ENCODE measurements at regions of chr9 and their contacts with region 1.

Region 1: DNA sequence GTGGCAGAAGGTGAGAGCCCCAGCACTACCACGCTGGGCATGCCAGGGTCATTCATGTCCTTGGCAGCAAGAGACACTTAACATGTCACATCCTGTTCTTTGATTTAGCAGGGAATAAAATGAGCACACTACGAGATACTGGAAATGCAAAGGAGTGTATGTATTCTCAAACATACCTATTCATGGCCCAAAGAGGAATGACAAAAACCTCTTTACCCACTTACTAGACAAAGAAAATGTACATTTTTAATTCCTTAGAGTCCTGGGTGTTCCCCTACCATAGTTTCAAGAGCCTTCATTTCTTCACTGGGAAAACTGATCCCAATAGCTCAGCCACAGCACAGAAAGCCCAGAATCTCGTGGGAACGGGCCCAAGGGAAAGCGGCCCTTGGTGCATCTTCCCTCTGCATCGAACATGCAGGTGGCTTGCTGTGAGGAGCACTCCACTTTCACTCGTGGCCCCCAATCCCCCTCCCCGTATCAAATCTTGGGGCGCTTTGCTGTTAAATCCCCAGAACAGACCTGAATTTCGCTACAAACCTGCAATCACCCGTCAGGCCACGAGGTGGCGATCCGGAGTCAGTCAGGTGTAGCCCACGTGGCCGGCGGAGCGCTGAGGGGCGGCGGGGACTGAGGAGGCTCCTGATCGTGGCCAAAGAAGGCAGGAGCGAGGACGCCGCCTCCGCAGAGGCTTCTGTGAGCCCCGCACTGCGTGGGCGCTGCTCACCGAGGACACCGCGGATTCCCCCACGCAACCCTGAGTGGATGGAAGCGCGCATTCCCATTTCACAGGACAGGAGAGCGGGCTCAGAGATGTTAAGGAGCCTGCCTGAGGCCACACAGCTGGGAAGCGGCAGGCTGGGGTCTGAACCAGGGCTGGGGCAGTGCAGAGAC is 91.4 kb downstream of the LMX1B start:
- DNase-seq: peak; percentile 88
- ATAC-seq: peak; percentile 71
- H3K4me3 Mint-ChIP-seq: no peak overlapping the region
- H3K27ac Mint-ChIP-seq: no peak overlapping the region
- H3K4me1 Mint-ChIP-seq: peaks cover 14% of the 10 kb centered on the region
- H3K27me3 Mint-ChIP-seq: peaks cover 35% of the 10 kb centered on the region

Region 2: GRCh38 chr9:126715382-126715781 is 10.3 kb after region 1 on chr9:
- CTCF ChIA-PET with region 1: interaction called, 74 read pairs
- DNase-seq: no peak
- ATAC-seq: no peak
- H3K4me3 Mint-ChIP-seq: no peak overlapping the region
- H3K27ac Mint-ChIP-seq: no peak overlapping the region
- H3K4me1 Mint-ChIP-seq: peaks cover 16% of the 10 kb centered on the region
- H3K27me3 Mint-ChIP-seq: peaks cover 28% of the 10 kb centered on the region

Region 3: DNA sequence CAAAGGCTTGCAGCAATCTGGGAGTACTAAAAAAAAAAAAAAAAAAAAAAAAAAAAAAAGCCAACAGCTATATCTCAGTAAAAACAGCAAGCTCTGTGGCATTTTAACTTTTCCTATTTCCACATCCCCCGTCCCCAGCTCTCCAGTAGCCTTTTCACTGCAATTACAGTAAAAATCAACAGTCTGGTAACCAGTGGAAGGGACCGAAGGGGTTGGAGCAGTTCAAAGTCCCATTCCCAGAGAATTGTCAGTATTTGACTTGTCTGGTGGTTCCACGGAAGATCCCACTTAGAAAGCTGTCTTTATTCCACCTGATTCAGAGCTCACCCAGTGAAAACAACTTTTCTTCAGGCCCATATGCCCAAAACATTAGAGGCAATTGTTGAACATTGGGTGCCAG is 27.9 kb after region 1 on chr9:
- CTCF ChIA-PET with region 1: interaction called, 39 read pairs
- DNase-seq: peak; percentile 7
- ATAC-seq: no peak
- H3K4me3 Mint-ChIP-seq: no peak overlapping the region
- H3K27ac Mint-ChIP-seq: no peak overlapping the region
- H3K4me1 Mint-ChIP-seq: no peaks in the 10 kb centered on the region
- H3K27me3 Mint-ChIP-seq: peaks cover 32% of the 10 kb centered on the region

Region 4: DNA sequence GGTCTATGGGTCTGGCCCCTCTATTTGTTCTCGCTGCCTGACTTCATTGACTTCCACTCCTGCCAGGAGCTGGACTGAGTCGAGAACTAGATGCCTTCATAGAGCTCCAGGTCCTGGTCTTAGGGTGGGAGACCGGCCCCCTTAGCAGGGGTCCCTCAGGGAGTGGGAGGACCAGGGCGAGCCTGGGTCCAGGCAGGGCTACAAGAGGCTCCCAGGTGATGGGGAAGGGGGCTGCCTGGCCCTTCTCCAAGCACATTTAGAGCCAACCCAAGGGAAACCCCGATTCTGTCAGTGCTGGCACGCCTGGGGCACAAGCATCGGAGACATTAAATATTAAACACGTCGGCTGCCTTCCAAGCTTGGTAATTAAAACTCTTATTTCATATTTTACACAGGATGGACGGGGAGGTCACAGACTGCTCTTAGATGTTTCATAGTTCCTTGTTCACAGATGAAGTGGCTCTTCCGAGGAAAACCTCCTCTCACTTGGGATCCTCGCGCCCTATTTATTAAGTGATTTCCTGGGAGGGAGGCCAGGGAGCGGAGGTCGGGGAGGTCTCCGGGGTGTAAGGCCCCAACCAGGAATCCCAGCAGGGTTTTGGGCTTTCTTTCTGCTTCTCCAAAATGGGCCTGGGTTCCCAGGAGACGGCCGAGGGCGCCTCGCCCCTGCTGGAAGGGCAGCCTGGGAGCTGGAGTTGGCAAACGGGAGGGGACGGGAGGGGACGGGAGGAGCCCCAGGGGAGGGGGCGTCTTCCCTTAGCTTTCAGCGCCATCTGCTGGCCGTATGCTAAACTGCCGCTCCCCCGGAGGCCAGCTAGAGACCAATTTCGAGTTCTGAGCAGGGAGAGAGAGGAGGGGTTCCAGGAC is 76.3 kb after region 1 on chr9:
- CTCF ChIA-PET with region 1: interaction called, 609 read pairs
- DNase-seq: peak; percentile 85
- ATAC-seq: peak; percentile 87
- H3K4me3 Mint-ChIP-seq: no peak overlapping the region
- H3K27ac Mint-ChIP-seq: no peak overlapping the region
- H3K4me1 Mint-ChIP-seq: peaks cover 3% of the 10 kb centered on the region
- H3K27me3 Mint-ChIP-seq: peaks cover 13% of the 10 kb centered on the region

Region 5: DNA sequence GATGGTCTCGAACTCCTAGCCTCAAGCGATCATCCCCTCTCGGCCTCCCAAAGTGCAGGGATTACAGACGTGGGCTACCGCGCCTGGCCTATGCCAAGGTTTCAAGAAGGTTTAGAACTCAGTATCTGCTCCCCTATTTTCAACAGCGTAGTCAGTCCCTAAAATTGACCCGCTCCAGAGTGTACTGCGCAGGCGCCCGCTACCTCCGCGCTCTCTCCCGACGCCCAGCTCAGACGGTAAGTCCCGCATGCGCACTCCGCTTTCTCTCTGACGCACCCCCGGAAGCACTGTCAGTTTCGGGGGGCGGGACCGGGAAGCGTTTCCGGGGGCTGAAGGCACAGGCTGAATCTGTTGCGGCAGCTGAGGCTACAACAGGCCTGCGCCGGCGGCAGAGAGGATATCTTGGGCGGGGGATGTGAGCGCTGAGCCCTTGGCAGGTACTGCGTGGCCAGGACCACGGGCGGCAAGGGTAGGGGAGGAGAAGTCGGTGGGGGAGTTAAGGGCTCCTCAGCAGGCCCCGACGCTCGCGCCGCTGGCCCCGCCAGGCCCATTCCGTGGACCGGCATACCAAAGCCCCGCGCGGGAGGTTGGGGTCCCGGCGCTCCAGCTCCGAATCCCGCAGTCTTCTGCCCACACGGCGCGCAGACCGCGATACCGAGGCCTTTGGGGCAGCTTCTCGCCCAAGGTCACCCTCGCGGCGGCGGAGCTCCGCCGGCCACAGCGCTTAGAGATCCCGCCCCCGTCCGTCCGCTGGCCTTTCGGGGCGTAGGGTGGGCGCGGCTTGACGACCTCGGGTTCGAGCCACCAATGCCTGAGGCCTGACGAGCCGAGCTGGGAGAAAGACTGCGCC is 99.8 kb after region 1 on chr9 and contains the start of gene ZBTB43:
- CTCF ChIA-PET with region 1: interaction called, 16 read pairs
- DNase-seq: peak; percentile 99
- ATAC-seq: peak; percentile 83
- H3K4me3 Mint-ChIP-seq: peak within 1 kb of the TSS; percentile 96
- H3K27ac Mint-ChIP-seq: peak within 1 kb of the TSS; percentile 99
- H3K4me1 Mint-ChIP-seq: peaks cover 40% of the 10 kb centered on the region
- H3K27me3 Mint-ChIP-seq: no peaks in the 10 kb centered on the region
- total RNA-seq, gene ZBTB43: 25.2 to 28.9 TPM

Measured in activated CD8-positive, alpha-beta memory T cell treated with anti-CD3 and anti-CD28 coated beads, Interleukin-2, amount 10 ng/mL, durations not matched to agents 7 days and 5 days (primary cell).